Caco-2 (cell line): ENCODE measurements at regions of chr20 and their contacts with region 1.

Region 1: GRCh38 chr20:53216856-53217576 is 244.9 kb downstream of the TSHZ2 start:
- DNase-seq: peak; percentile 79 to 92
- H3K4me3 ChIP-seq: no peak overlapping the region
- H3K4me3 Mint-ChIP-seq: no peak overlapping the region
- H3K27ac Mint-ChIP-seq: no peak overlapping the region
- H3K4me1 ChIP-seq: no peaks in the 10 kb centered on the region
- H3K4me1 Mint-ChIP-seq: no peaks in the 10 kb centered on the region
- H3K27me3 ChIP-seq: peaks cover 2% of the 10 kb centered on the region; the same call in 1 of the 2 replicates
- H3K27me3 Mint-ChIP-seq: peaks cover 26% of the 10 kb centered on the region
- CTCF ChIP-seq: peak; percentile 99 to 100

Region 2: GRCh38 chr20:52191132-52191915 is 1025.7 kb before region 1 on chr20 and contains the start of gene ZFP64:
- CTCF ChIA-PET with region 1: no interaction called
- POLR2A ChIA-PET with region 1: no interaction called
- intact Hi-C with region 1: loop called (anchors 5 kb)
- DNase-seq: peak; percentile 90 to 92
- H3K4me3 ChIP-seq: peak within 1 kb of the TSS; percentile 97
- H3K4me3 Mint-ChIP-seq: peak within 1 kb of the TSS; percentile 85
- H3K27ac Mint-ChIP-seq: peak within 1 kb of the TSS; percentile 55
- H3K4me1 ChIP-seq: 0 out of 2 replicates have a peak, but pooled peaks cover 7% of the 10 kb centered on the region
- H3K4me1 Mint-ChIP-seq: peaks cover 21% of the 10 kb centered on the region
- H3K27me3 ChIP-seq: no peaks in the 10 kb centered on the region
- H3K27me3 Mint-ChIP-seq: no peaks in the 10 kb centered on the region
- CTCF ChIP-seq: peak; percentile 82 to 98
- total RNA-seq, gene ZFP64: 25.4 and 25.6 TPM in 2 replicates

Region 3: GRCh38 chr20:52312132-52312729 is 904.8 kb before region 1 on chr20:
- CTCF ChIA-PET with region 1: no interaction called
- POLR2A ChIA-PET with region 1: no interaction called
- intact Hi-C with region 1: loop called (anchors 2 kb)
- DNase-seq: peak; percentile 63 to 75
- H3K4me3 ChIP-seq: no peak overlapping the region
- H3K4me3 Mint-ChIP-seq: no peak overlapping the region
- H3K27ac Mint-ChIP-seq: no peak overlapping the region
- H3K4me1 ChIP-seq: no peaks in the 10 kb centered on the region
- H3K4me1 Mint-ChIP-seq: no peaks in the 10 kb centered on the region
- H3K27me3 ChIP-seq: no peaks in the 10 kb centered on the region
- H3K27me3 Mint-ChIP-seq: peaks cover 26% of the 10 kb centered on the region
- CTCF ChIP-seq: peak; percentile 91 to 97

Region 4: DNA sequence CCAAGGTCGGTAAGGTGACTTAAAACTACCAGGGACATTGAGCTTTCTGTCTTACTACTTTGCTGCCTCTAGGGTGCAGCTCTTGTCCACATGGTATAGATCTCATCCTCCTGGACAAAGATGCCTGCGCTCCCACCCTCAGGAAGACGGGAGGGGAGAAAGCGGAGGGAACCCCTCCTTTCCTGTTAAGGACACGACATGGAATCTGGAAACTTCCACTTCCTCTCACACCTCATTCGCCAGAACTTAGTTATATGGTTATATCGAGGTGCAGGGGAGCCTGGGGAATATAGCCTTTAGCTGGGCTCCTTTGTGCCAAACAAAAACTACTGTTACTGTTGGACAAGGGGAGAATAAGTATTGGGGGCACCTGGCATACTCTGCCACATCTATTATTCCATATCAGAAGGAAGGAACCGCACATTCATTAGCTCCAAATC is 469.2 kb before region 1 on chr20:
- CTCF ChIA-PET with region 1: interaction called, 3 read pairs
- POLR2A ChIA-PET with region 1: no interaction called
- intact Hi-C with region 1: loop called (anchors 2 kb)
- DNase-seq: peak in 1 of 2 experiments; percentile 26
- H3K4me3 ChIP-seq: no peak overlapping the region
- H3K4me3 Mint-ChIP-seq: no peak overlapping the region
- H3K27ac Mint-ChIP-seq: no peak overlapping the region
- H3K4me1 ChIP-seq: no peaks in the 10 kb centered on the region
- H3K4me1 Mint-ChIP-seq: no peaks in the 10 kb centered on the region
- H3K27me3 ChIP-seq: no peaks in the 10 kb centered on the region; the same call in 1 of the 2 replicates
- H3K27me3 Mint-ChIP-seq: peaks cover 18% of the 10 kb centered on the region
- CTCF ChIP-seq: peak; percentile 57 to 58

Region 5: GRCh38 chr20:53100476-53100911 is 116.5 kb before region 1 on chr20:
- CTCF ChIA-PET with region 1: no interaction called
- POLR2A ChIA-PET with region 1: no interaction called
- intact Hi-C with region 1: no loop called
- DNase-seq: no peak
- H3K4me3 ChIP-seq: no peak overlapping the region
- H3K4me3 Mint-ChIP-seq: no peak overlapping the region
- H3K27ac Mint-ChIP-seq: no peak overlapping the region
- H3K4me1 ChIP-seq: no peaks in the 10 kb centered on the region
- H3K4me1 Mint-ChIP-seq: no peaks in the 10 kb centered on the region
- H3K27me3 ChIP-seq: no peaks in the 10 kb centered on the region
- H3K27me3 Mint-ChIP-seq: peaks cover 10% of the 10 kb centered on the region
- CTCF ChIP-seq: no peak

Region 6: GRCh38 chr20:53157443-53158408 is 59.3 kb before region 1 on chr20:
- CTCF ChIA-PET with region 1: no interaction called
- POLR2A ChIA-PET with region 1: no interaction called
- intact Hi-C with region 1: loop called (anchors 1 kb)
- DNase-seq: peak; percentile 71 to 81
- H3K4me3 ChIP-seq: no peak overlapping the region
- H3K4me3 Mint-ChIP-seq: no peak overlapping the region
- H3K27ac Mint-ChIP-seq: no peak overlapping the region
- H3K4me1 ChIP-seq: no peaks in the 10 kb centered on the region
- H3K4me1 Mint-ChIP-seq: no peaks in the 10 kb centered on the region
- H3K27me3 ChIP-seq: no peaks in the 10 kb centered on the region; the same call in 1 of the 2 replicates
- H3K27me3 Mint-ChIP-seq: no peaks in the 10 kb centered on the region
- CTCF ChIP-seq: peak; percentile 69 to 75

Region 7: DNA sequence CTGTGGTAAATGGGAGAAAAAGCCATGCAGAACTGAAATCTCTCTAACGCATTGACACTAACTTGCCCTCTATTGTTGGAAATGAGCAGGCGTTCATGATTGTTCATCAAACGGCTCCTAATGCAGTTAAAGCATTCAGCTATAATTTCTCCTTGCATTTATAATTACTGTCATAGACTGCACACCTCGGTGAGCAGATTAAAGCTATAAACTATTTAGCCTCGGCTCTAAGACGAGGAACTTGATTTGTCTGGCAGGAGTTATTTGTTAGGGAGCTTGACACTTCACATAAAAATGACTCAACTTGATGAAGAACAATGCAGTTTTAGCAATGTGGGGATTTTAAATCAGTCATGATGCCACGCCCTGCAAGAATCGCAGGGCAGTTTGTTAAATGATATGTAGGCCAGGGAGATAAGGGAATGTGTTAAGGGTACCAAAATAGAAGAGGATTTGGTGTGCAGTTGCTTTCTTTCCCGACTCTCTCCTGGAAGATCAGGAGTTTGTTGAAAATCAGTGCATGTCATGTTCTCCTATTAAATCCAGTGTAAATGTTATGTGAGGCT is 45.4 kb after region 1 on chr20:
- CTCF ChIA-PET with region 1: interaction called, 12 read pairs
- POLR2A ChIA-PET with region 1: no interaction called
- intact Hi-C with region 1: no loop called
- DNase-seq: no peak
- H3K4me3 ChIP-seq: no peak overlapping the region
- H3K4me3 Mint-ChIP-seq: no peak overlapping the region
- H3K27ac Mint-ChIP-seq: no peak overlapping the region
- H3K4me1 ChIP-seq: peaks cover 13% of the 10 kb centered on the region; the same call in 1 of the 2 replicates
- H3K4me1 Mint-ChIP-seq: peaks cover 6% of the 10 kb centered on the region
- H3K27me3 ChIP-seq: no peaks in the 10 kb centered on the region
- H3K27me3 Mint-ChIP-seq: peaks cover 4% of the 10 kb centered on the region
- CTCF ChIP-seq: no peak

Region 8: DNA sequence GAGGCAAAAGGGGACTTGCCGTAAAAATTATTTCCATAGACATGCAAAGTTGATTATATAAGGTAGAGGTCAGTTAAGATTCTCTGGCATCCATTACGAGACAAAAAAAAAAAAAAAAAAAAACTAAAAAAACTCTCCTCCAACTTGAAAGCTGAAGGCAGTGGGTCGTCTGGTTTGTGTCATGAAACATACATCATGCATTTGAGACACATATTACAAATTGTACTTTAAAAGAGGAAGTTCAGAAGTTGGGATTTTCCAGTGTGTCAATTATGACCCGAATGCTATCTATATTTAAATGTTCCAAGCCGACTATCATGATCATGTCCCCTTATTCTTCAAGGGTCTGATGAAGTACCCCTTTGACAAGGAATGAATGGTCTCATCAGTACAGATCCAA is 251.6 kb after region 1 on chr20:
- CTCF ChIA-PET with region 1: no interaction called
- POLR2A ChIA-PET with region 1: no interaction called
- intact Hi-C with region 1: no loop called
- DNase-seq: no peak
- H3K4me3 ChIP-seq: no peak overlapping the region
- H3K4me3 Mint-ChIP-seq: no peak overlapping the region
- H3K27ac Mint-ChIP-seq: no peak overlapping the region
- H3K4me1 ChIP-seq: no peaks in the 10 kb centered on the region
- H3K4me1 Mint-ChIP-seq: no peaks in the 10 kb centered on the region
- H3K27me3 ChIP-seq: no peaks in the 10 kb centered on the region
- H3K27me3 Mint-ChIP-seq: no peaks in the 10 kb centered on the region
- CTCF ChIP-seq: no peak

Region 9: GRCh38 chr20:53510262-53510661 is 293.2 kb after region 1 on chr20:
- CTCF ChIA-PET with region 1: no interaction called
- POLR2A ChIA-PET with region 1: no interaction called
- intact Hi-C with region 1: no loop called
- DNase-seq: no peak
- H3K4me3 ChIP-seq: no peak overlapping the region
- H3K4me3 Mint-ChIP-seq: no peak overlapping the region
- H3K27ac Mint-ChIP-seq: peak overlapping the region; percentile 62
- H3K4me1 ChIP-seq: peaks cover 30% of the 10 kb centered on the region
- H3K4me1 Mint-ChIP-seq: peaks cover 28% of the 10 kb centered on the region
- H3K27me3 ChIP-seq: no peaks in the 10 kb centered on the region
- H3K27me3 Mint-ChIP-seq: no peaks in the 10 kb centered on the region
- CTCF ChIP-seq: no peak